ENCODE measurements at regions of chr19 and their contacts with region 1.

Region 1: DNA sequence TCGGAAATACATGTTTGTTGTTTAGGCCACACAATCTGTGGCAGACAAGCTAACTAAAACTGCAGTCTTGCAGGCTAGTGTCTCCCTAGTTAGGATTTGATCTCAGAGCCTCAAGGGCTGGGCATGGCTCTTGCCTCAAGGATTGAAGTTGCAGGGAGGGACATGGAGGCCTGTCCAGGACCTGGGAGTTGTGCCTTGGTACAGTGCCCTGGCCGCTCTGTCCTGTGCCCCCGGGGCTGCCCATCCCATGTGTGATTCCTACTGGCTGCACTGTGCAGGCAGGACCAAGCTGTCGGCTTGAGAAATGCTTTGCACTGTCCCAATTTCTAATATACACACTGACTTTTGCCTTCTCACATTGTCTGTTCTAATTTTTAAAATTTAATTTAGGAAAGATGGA is 7.5 kb upstream of the ZNF256 start:
- DNase-seq: no peak
- ATAC-seq: no peak
- H3K4me3 ChIP-seq: peak overlapping the region in 1 of 2 donors; percentile 10
- H3K4me3 Mint-ChIP-seq: no peak overlapping the region
- H3K27ac ChIP-seq: no peak overlapping the region
- H3K27ac Mint-ChIP-seq: no peak overlapping the region
- H3K4me1 ChIP-seq: no peaks in the 10 kb centered on the region
- H3K4me1 Mint-ChIP-seq: no peaks in the 10 kb centered on the region
- H3K27me3 ChIP-seq: peaks cover 0 to 25% of the 10 kb centered on the region in 2 experiments
- H3K27me3 Mint-ChIP-seq: peaks cover 0 to 5% of the 10 kb centered on the region in 2 donors

Region 2: GRCh38 chr19:57934820-57935665 is 20.0 kb before region 1 on chr19 and contains the start of gene ZNF418:
- CTCF ChIA-PET with region 1: no interaction called
- POLR2A ChIA-PET with region 1: interaction called in 1 of 2 experiments, 11 read pairs
- DNase-seq: peak in 31 of 35 experiments; percentile 6 to 64 (median 28)
- ATAC-seq: peak; percentile 80 to 99 (median 88)
- H3K4me3 ChIP-seq: peak within 1 kb of the TSS; percentile 48 to 58
- H3K4me3 Mint-ChIP-seq: peak within 1 kb of the TSS; percentile 82 to 90 (median 88)
- H3K27ac ChIP-seq: peak within 1 kb of the TSS; percentile 21
- H3K27ac Mint-ChIP-seq: peak within 1 kb of the TSS; percentile 66 to 83
- H3K4me1 ChIP-seq: no peaks in the 10 kb centered on the region
- H3K4me1 Mint-ChIP-seq: peaks cover 8 to 11% (median 8%) of the 10 kb centered on the region in 3 donors
- H3K27me3 ChIP-seq: peaks cover 0 to 7% of the 10 kb centered on the region in 2 experiments
- H3K27me3 Mint-ChIP-seq: no peaks in the 10 kb centered on the region
- total RNA-seq, gene ZNF418: 2.3 to 9.0 (median 6.3) TPM

Region 3: GRCh38 chr19:57974434-57974833 is 19.4 kb after region 1 on chr19 and contains the start of gene C19orf18:
- CTCF ChIA-PET with region 1: interaction called in 1 of 2 experiments, 11 read pairs
- POLR2A ChIA-PET with region 1: no interaction called
- DNase-seq: no peak
- ATAC-seq: no peak
- H3K4me3 ChIP-seq: no peak within 1 kb of the TSS
- H3K4me3 Mint-ChIP-seq: no peak within 1 kb of the TSS
- H3K27ac ChIP-seq: no peak within 1 kb of the TSS
- H3K27ac Mint-ChIP-seq: no peak within 1 kb of the TSS
- H3K4me1 ChIP-seq: no peaks in the 10 kb centered on the region
- H3K4me1 Mint-ChIP-seq: no peaks in the 10 kb centered on the region
- H3K27me3 ChIP-seq: no peaks in the 10 kb centered on the region
- H3K27me3 Mint-ChIP-seq: no peaks in the 10 kb centered on the region
- total RNA-seq, gene C19orf18: 0.66 to 1.2 (median 0.93) TPM